ENCODE measurements at regions of chr6 and their contacts with region 1.

Region 1: DNA sequence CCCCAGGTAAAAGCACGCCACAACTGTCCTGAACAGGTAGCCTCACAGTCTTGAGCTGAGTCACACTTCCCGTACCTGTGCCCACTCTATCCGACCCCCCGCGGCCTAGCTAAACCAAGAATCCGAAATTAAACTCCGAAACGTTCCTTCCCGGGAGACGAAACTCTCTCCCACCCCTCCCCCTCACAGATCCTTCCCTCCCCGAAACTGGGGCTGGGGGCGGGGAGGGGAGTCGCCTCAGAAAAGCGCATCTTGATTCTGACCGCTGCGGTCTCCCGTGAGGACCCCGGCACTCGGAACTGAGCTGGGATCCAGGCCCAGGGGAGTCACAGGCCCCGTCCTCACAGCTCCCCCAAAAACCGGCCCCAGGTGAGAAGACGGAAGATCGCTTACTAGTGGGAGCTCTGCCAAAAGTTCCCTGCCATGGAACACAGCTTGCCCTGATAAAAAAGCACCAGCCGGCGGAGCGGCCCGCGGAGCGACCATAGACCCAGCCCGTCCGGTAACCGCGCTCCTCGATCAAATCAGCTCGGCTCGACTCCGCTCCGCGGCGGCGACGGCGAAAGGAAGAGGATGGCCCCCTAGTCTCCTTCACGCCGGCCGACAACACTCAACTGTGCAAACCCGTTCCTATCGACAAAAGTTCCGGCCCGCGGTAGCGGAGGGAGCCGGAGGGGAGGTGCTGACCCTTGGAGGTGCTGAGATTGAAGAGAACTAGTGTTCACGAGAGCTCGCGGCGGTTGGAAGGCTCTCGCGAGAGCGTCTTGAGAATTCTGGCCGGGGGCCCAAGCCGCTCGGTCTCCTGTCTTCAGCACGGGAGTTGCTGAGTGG is at the start of gene CCNC:
- DNase-seq: peak; percentile 93
- ATAC-seq: peak; percentile 98
- H3K4me3 ChIP-seq: peak within 1 kb of the TSS; percentile 75 to 88 (median 78)
- H3K27ac ChIP-seq: peak within 1 kb of the TSS; percentile 92
- H3K4me1 ChIP-seq: peaks cover 25% of the 10 kb centered on the region
- H3K27me3 ChIP-seq: no peaks in the 10 kb centered on the region; a peak in 1 of 5 replicates
- CTCF ChIP-seq: peak; percentile 31; the same call in 1 of the 2 replicates
- EP300 ChIP-seq: peak in 1 of 2 experiments; percentile 38; a peak in 1 of 4 replicates
- POLR2A ChIP-seq: peak; percentile 92
- RAD21 ChIP-seq: peak; percentile 60; the same call in 1 of the 2 replicates
- total RNA-seq, gene CCNC: 141 and 193 TPM in 2 replicates

Region 2: DNA sequence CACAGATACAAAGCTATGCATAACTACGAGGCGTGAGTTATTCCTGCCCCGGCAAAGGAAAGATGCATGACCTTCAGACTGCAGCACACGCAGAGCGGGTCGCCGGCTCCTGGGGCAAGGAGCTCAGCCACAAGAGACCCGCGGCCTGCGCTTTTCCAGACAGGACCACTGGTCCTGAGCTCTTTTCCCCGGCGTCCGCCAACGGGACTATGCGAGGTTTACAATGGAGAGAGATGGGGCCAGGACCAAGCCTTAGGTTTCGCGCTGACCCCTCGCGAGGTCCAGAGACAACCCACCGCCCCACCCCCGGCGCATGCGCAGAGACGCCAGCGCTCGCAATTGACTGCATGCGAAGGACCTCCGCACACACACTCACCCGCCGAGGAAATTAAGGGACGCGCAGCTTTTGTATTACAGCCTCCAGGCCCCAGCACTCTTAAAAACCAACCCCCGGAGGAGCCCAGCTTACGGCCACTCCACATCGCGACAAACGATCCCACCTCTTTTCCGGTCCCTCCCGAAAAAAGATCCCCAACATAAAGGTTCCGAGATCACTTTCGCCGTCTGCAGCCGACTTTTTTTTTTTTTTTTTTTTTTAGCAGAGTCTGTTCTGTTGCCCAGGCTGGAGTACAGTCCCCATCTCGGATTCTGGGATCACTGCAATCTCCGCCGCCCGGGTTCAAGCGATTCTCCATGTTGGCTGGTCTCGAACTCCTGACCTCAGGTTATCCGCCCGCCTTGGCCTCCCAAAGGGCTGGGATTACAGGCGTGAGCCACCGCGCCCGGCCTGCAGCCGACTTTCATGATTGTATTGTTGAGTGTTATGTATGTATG is 174.4 kb before region 1 on chr6 and contains the start of gene COQ3:
- CTCF ChIA-PET with region 1: no interaction called
- POLR2A ChIA-PET with region 1: interaction called, 10 read pairs
- in situ Hi-C with region 1: no loop called
- intact Hi-C with region 1: no loop called
- DNase-seq: peak; percentile 84
- ATAC-seq: peak; percentile 99
- H3K4me3 ChIP-seq: peak within 1 kb of the TSS; percentile 64 to 85 (median 67)
- H3K27ac ChIP-seq: peak within 1 kb of the TSS; percentile 82
- H3K4me1 ChIP-seq: peaks cover 19% of the 10 kb centered on the region
- H3K27me3 ChIP-seq: no peaks in the 10 kb centered on the region
- CTCF ChIP-seq: no peak
- EP300 ChIP-seq: no peak
- POLR2A ChIP-seq: peak; percentile 91 to 96
- RAD21 ChIP-seq: 0 out of 2 replicates have a peak, but pooled peaks have one; percentile 50
- total RNA-seq, gene COQ3: 20.5 and 26.6 TPM in 2 replicates

Region 3: GRCh38 chr6:99425647-99426453 is 142.5 kb before region 1 on chr6:
- CTCF ChIA-PET with region 1: no interaction called
- POLR2A ChIA-PET with region 1: interaction called, 33 read pairs
- in situ Hi-C with region 1: no loop called
- intact Hi-C with region 1: loop called (anchors 2 kb)
- DNase-seq: peak; percentile 91
- ATAC-seq: peak; percentile 77
- H3K4me3 ChIP-seq: peak overlapping the region; percentile 59 to 85 (median 84)
- H3K27ac ChIP-seq: peak overlapping the region; percentile 98
- H3K4me1 ChIP-seq: peaks cover 55% of the 10 kb centered on the region
- H3K27me3 ChIP-seq: no peaks in the 10 kb centered on the region; a peak in 1 of 5 replicates
- CTCF ChIP-seq: peak; percentile 73
- EP300 ChIP-seq: no peak
- POLR2A ChIP-seq: no peak
- RAD21 ChIP-seq: 0 out of 2 replicates have a peak, but pooled peaks have one; percentile 7

Region 4: GRCh38 chr6:99520855-99521632 is 47.3 kb before region 1 on chr6:
- CTCF ChIA-PET with region 1: no interaction called
- POLR2A ChIA-PET with region 1: interaction called, 13 read pairs
- in situ Hi-C with region 1: no loop called
- intact Hi-C with region 1: loop called (anchors 2 kb)
- DNase-seq: peak; percentile 74
- ATAC-seq: peak; percentile 98
- H3K4me3 ChIP-seq: peak overlapping the region; percentile 92 to 99 (median 94)
- H3K27ac ChIP-seq: peak overlapping the region; percentile 94
- H3K4me1 ChIP-seq: peaks cover 24% of the 10 kb centered on the region
- H3K27me3 ChIP-seq: no peaks in the 10 kb centered on the region; a peak in 1 of 5 replicates
- CTCF ChIP-seq: peak; percentile 68
- EP300 ChIP-seq: no peak
- POLR2A ChIP-seq: peak; percentile 93 to 95
- RAD21 ChIP-seq: 0 out of 2 replicates have a peak, but pooled peaks have one; percentile 9

Region 5: DNA sequence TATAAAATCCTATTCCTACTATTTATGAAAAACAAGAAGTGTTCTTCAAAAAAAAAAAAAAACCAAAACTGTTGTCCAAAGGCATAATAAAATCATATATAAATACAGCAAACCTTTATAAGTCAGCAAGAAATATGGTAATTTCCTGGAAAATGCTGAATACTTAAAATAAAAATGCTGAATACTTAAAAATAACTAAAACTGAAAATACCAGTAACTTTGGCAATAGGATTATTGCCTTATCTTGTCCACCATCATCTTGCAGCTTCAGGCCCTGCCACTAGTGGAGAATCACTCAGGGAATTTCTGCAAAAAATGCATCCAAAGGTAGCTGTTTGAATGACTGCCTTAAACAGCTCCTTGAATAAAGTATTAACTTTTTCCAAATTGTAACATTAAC is 24.4 kb before region 1 on chr6:
- CTCF ChIA-PET with region 1: no interaction called
- POLR2A ChIA-PET with region 1: interaction called, 10 read pairs
- in situ Hi-C with region 1: no loop called
- intact Hi-C with region 1: no loop called
- DNase-seq: no peak
- ATAC-seq: no peak
- H3K4me3 ChIP-seq: no peak overlapping the region
- H3K27ac ChIP-seq: no peak overlapping the region
- H3K4me1 ChIP-seq: no peaks in the 10 kb centered on the region
- H3K27me3 ChIP-seq: no peaks in the 10 kb centered on the region
- CTCF ChIP-seq: no peak
- EP300 ChIP-seq: no peak
- POLR2A ChIP-seq: no peak
- RAD21 ChIP-seq: no peak

Region 6: GRCh38 chr6:99588618-99589289 is 20.4 kb after region 1 on chr6:
- CTCF ChIA-PET with region 1: interaction called, 3 read pairs
- POLR2A ChIA-PET with region 1: interaction called, 12 read pairs
- in situ Hi-C with region 1: no loop called
- intact Hi-C with region 1: no loop called
- DNase-seq: peak; percentile 59
- ATAC-seq: peak; percentile 99
- H3K4me3 ChIP-seq: peak overlapping the region; percentile 51 to 79 (median 57)
- H3K27ac ChIP-seq: no peak overlapping the region
- H3K4me1 ChIP-seq: peaks cover 13% of the 10 kb centered on the region
- H3K27me3 ChIP-seq: peaks cover 5 to 47% of the 10 kb centered on the region in 2 experiments
- CTCF ChIP-seq: peak; percentile 88
- EP300 ChIP-seq: no peak
- POLR2A ChIP-seq: no peak
- RAD21 ChIP-seq: peak; percentile 84